Naive thymus-derived CD4-positive, alpha-beta T cell (primary cell): ENCODE measurements at regions of chr14 and their contacts with region 1.

Region 1: DNA sequence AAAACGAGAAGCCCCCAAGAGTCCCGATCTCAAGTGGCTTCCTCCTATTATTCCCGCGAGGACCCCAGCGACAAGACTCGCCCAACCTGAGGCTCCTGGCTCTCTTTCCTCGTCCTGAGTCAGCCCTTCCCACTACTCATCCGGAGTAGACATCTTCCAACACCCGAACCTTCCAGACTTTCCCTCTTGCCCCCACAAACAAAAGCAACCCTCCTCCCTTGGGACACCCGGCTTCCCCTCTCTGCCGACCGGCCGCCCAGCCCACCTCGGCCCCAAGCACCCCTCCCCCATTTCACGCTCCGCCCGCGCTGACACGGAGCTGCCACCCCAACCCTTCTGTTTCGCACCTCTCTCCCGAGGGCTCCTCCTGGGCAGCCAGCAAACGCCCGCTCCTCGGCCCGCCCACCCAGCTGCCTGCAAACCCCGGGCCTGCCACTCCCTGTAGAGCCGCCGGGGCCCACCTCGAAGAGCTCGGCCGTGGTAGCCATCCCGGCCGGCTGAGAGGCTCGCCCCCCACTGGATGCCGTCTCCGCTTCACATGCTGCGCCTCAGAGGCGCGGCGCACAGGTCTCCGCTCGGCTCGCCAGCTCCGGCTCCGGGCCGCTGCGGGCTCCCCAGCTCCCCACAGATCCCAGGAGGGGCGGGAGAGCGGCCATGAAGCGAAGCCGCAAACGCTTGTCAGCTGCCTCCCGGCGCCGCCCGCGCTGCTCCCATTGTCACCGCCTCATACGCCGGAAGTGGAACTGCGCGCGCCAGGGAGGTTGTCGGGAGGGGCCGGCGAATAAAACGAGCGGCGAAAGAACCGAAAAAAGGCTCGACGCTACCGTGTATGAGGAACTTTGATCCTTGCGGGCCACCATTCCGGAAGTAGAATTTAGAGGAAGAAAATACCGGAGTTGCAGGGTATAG is at the starts of genes AP5M1 and EXOC5:
- DNase-seq: peak; percentile 78 to 95 (median 93)
- ATAC-seq: peak; percentile 89
- H3K4me3 ChIP-seq: peak within 1 kb of the TSS; percentile 89
- H3K4me3 Mint-ChIP-seq: peak within 1 kb of the TSS; percentile 97 to 100 (median 99)
- H3K27ac ChIP-seq: peak within 1 kb of the TSS; percentile 91
- H3K27ac Mint-ChIP-seq: peak within 1 kb of the TSS; percentile 98 to 100 (median 99)
- H3K4me1 ChIP-seq: peaks cover 29 to 34% of the 10 kb centered on the region in 2 donors
- H3K4me1 Mint-ChIP-seq: peaks cover 41 to 93% (median 76%) of the 10 kb centered on the region in 7 donors
- H3K27me3 ChIP-seq: no peaks in the 10 kb centered on the region
- H3K27me3 Mint-ChIP-seq: no peaks in the 10 kb centered on the region
- total RNA-seq, gene AP5M1: 42.3 to 62.8 (median 52.1) TPM
- total RNA-seq, gene EXOC5: 27.3 to 71.6 (median 42.2) TPM

Region 2: GRCh38 chr14:56579345-56580220 is 688.8 kb before region 1 on chr14 and contains the start of gene TMEM260:
- CTCF ChIA-PET with region 1: interaction called, 3 read pairs
- POLR2A ChIA-PET with region 1: interaction called, 17 read pairs
- intact Hi-C with region 1: loop called (anchors 1 kb)
- DNase-seq: peak; percentile 83 to 95 (median 92)
- ATAC-seq: peak; percentile 98
- H3K4me3 ChIP-seq: peak within 1 kb of the TSS; percentile 83
- H3K4me3 Mint-ChIP-seq: peak within 1 kb of the TSS; percentile 87 to 97 (median 95)
- H3K27ac ChIP-seq: peak within 1 kb of the TSS; percentile 88
- H3K27ac Mint-ChIP-seq: peak within 1 kb of the TSS; percentile 90 to 98 (median 96)
- H3K4me1 ChIP-seq: peaks cover 19 to 22% of the 10 kb centered on the region in 2 donors
- H3K4me1 Mint-ChIP-seq: peaks cover 33 to 45% (median 42%) of the 10 kb centered on the region in 7 donors
- H3K27me3 ChIP-seq: no peaks in the 10 kb centered on the region
- H3K27me3 Mint-ChIP-seq: no peaks in the 10 kb centered on the region
- total RNA-seq, gene TMEM260: 20.8 to 39.0 (median 27.4) TPM

Region 3: DNA sequence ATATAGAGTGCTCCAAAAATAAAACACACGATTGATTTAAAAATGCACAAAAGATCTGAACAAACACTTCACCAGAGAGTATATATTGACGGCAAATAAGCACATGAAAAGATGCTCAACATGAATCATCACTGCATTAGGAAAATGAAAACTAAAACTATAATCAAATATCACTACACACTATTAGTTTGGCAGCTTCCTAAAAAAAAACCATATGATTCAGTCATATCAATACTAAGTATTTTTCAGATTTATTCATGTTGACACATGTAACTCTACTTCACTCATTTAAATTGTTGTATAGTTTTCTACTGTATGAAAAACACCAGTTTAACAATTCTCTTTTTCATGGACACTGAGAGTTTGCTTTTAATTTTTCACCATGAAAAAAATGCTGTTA is 41.3 kb before region 1 on chr14:
- CTCF ChIA-PET with region 1: no interaction called
- POLR2A ChIA-PET with region 1: no interaction called
- intact Hi-C with region 1: loop called (anchors 5 kb)
- DNase-seq: no peak
- ATAC-seq: no peak
- H3K4me3 ChIP-seq: no peak overlapping the region
- H3K4me3 Mint-ChIP-seq: no peak overlapping the region
- H3K27ac ChIP-seq: no peak overlapping the region
- H3K27ac Mint-ChIP-seq: peak overlapping the region in 1 of 9 donors; percentile 29
- H3K4me1 ChIP-seq: no peaks in the 10 kb centered on the region
- H3K4me1 Mint-ChIP-seq: peaks cover 0 to 6% (median 0%) of the 10 kb centered on the region in 7 donors
- H3K27me3 ChIP-seq: no peaks in the 10 kb centered on the region
- H3K27me3 Mint-ChIP-seq: no peaks in the 10 kb centered on the region

Region 4: GRCh38 chr14:57254884-57255283 is 13.5 kb before region 1 on chr14:
- CTCF ChIA-PET with region 1: no interaction called
- POLR2A ChIA-PET with region 1: interaction called, 7 read pairs
- intact Hi-C with region 1: loop called in 1 of 2 experiments (anchors 2 kb)
- DNase-seq: no peak
- ATAC-seq: no peak
- H3K4me3 ChIP-seq: no peak overlapping the region
- H3K4me3 Mint-ChIP-seq: no peak overlapping the region
- H3K27ac ChIP-seq: no peak overlapping the region
- H3K27ac Mint-ChIP-seq: no peak overlapping the region
- H3K4me1 ChIP-seq: no peaks in the 10 kb centered on the region
- H3K4me1 Mint-ChIP-seq: peaks cover 15 to 85% (median 69%) of the 10 kb centered on the region in 7 donors
- H3K27me3 ChIP-seq: no peaks in the 10 kb centered on the region
- H3K27me3 Mint-ChIP-seq: no peaks in the 10 kb centered on the region

Region 5: DNA sequence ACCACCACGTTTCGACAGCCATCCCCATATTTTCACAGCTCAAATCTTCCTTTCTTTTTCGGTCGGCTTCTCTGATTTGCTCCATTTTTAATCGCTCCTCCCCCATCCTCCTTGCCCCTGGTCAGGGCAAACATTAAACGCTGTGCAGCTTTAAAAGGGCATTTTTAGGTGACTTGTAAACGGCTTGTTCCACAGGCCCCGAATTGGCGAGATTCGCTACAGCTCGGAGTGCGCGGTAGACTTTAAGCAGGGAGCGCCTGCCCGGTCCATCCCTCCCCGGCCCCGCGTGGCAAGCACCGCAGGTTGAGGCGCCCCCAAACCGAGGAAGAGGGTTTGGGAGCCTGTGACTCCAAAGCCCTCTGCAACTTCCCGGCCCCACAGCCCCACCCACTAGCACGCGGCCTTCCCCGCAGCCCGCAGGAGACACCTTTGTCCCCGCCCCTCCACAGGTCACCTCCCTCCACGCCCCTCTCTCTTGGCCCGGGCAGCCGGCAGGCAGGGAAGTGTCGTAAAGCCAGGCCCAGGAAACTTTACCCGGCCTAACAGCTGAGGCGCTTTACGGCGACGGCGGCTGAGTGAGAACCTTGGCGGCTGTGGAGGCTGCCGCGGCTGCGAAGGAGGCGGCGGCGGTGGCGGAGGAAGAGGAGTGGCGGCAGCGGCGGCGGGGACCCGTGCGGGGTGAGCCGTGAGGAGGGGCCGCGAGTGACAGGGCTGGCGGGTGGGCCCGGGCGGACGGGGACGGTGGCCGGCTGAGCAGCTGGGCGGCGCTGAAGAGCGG is 121.8 kb after region 1 on chr14 and contains the start of gene NAA30:
- CTCF ChIA-PET with region 1: no interaction called
- POLR2A ChIA-PET with region 1: interaction called, 17 read pairs
- intact Hi-C with region 1: loop called (anchors 1 kb)
- DNase-seq: peak; percentile 80 to 97 (median 92)
- ATAC-seq: peak; percentile 98
- H3K4me3 ChIP-seq: peak within 1 kb of the TSS; percentile 68
- H3K4me3 Mint-ChIP-seq: peak within 1 kb of the TSS; percentile 86 to 98 (median 94)
- H3K27ac ChIP-seq: peak within 1 kb of the TSS; percentile 72
- H3K27ac Mint-ChIP-seq: peak within 1 kb of the TSS; percentile 88 to 99 (median 95)
- H3K4me1 ChIP-seq: peaks cover 11 to 13% of the 10 kb centered on the region in 2 donors
- H3K4me1 Mint-ChIP-seq: peaks cover 31 to 58% (median 40%) of the 10 kb centered on the region in 7 donors
- H3K27me3 ChIP-seq: no peaks in the 10 kb centered on the region
- H3K27me3 Mint-ChIP-seq: peaks cover 0 to under 1% (median 0%) of the 10 kb centered on the region in 5 donors
- total RNA-seq, gene NAA30: 14.6 to 19.6 (median 16.2) TPM

Region 6: GRCh38 chr14:57725399-57726077 is 457.1 kb after region 1 on chr14:
- CTCF ChIA-PET with region 1: no interaction called
- POLR2A ChIA-PET with region 1: no interaction called
- intact Hi-C with region 1: no loop called
- DNase-seq: no peak
- ATAC-seq: no peak
- H3K4me3 ChIP-seq: no peak overlapping the region
- H3K4me3 Mint-ChIP-seq: no peak overlapping the region
- H3K27ac ChIP-seq: no peak overlapping the region
- H3K27ac Mint-ChIP-seq: no peak overlapping the region
- H3K4me1 ChIP-seq: no peaks in the 10 kb centered on the region
- H3K4me1 Mint-ChIP-seq: no peaks in the 10 kb centered on the region
- H3K27me3 ChIP-seq: no peaks in the 10 kb centered on the region
- H3K27me3 Mint-ChIP-seq: peaks cover 0 to 12% (median 6%) of the 10 kb centered on the region in 5 donors